HepG2 (cell line): ENCODE measurements at regions of chr19 and their contacts with region 1.

Region 1: GRCh38 chr19:41449079-41449864 is 6.3 kb downstream of the ERICH4 start:
- DNase-seq: peak; percentile 59
- ATAC-seq: peak; percentile 95
- H3K4me3 ChIP-seq: no peak overlapping the region
- H3K27ac ChIP-seq: no peak overlapping the region
- H3K4me1 ChIP-seq: 0 out of 2 replicates have a peak, but pooled peaks cover 4% of the 10 kb centered on the region
- H3K27me3 ChIP-seq: peaks cover 0 to 4% of the 10 kb centered on the region in 2 experiments; a peak in 1 of 5 replicates
- CTCF ChIP-seq: peak; percentile 96
- EP300 ChIP-seq: no peak
- POLR2A ChIP-seq: no peak
- RAD21 ChIP-seq: peak; percentile 87

Region 2: GRCh38 chr19:41495589-41495988 is 46.3 kb after region 1 on chr19:
- CTCF ChIA-PET with region 1: no interaction called
- POLR2A ChIA-PET with region 1: no interaction called
- in situ Hi-C with region 1: no loop called
- intact Hi-C with region 1: loop called (anchors 1 kb)
- DNase-seq: no peak
- ATAC-seq: no peak
- H3K4me3 ChIP-seq: no peak overlapping the region
- H3K27ac ChIP-seq: no peak overlapping the region
- H3K4me1 ChIP-seq: peaks cover under 1% of the 10 kb centered on the region
- H3K27me3 ChIP-seq: peaks cover 3 to 24% of the 10 kb centered on the region in 2 experiments
- CTCF ChIP-seq: no peak
- EP300 ChIP-seq: no peak
- POLR2A ChIP-seq: no peak
- RAD21 ChIP-seq: no peak

Region 3: GRCh38 chr19:41537789-41538188 is 88.5 kb after region 1 on chr19:
- CTCF ChIA-PET with region 1: interaction called, 12 read pairs
- POLR2A ChIA-PET with region 1: no interaction called
- in situ Hi-C with region 1: no loop called
- intact Hi-C with region 1: no loop called
- DNase-seq: peak; percentile 6
- ATAC-seq: no peak
- H3K4me3 ChIP-seq: no peak overlapping the region
- H3K27ac ChIP-seq: no peak overlapping the region
- H3K4me1 ChIP-seq: no peaks in the 10 kb centered on the region
- H3K27me3 ChIP-seq: peaks cover 0 to 13% of the 10 kb centered on the region in 2 experiments; a peak in 1 of 5 replicates
- CTCF ChIP-seq: peak; percentile 43; the same call in 1 of the 2 replicates
- EP300 ChIP-seq: no peak
- POLR2A ChIP-seq: no peak
- RAD21 ChIP-seq: no peak

Region 4: DNA sequence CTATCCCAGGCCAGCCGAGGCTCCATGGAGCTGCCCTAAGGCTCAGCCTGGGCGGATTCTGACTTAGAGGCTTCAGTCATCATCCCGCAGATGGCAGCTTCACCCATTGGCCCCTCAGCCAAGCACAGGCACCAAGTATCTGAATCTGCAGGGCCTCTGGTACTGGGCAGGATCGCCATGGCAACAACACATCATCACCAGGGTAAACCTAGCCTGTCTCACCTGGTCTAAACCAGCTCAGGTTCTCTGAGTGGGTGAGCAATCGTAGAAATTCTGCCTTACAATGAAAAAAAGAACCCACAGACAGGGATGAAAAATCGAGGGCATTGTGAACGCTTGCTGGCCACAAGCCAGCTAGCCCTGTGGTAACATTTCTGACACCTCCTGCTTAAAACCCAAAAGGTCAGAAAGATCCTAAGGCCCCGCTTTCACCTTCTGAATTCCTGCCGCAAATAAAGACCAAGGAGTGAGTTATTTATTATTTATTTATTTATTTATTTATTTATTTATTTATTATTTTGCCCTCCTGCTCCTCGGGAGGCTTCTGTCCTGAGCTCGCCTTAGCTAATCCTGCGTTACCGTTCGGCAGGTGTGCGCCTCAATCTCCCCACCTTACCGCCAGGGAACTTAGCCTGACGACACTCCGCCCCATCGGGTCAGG is 114.7 kb after region 1 on chr19:
- CTCF ChIA-PET with region 1: interaction called, 22 read pairs
- POLR2A ChIA-PET with region 1: interaction called, 4 read pairs
- in situ Hi-C with region 1: loop called (anchors 5 kb)
- intact Hi-C with region 1: loop called (anchors 1 kb)
- DNase-seq: no peak
- ATAC-seq: no peak; the same call in 1 of the 3 replicates
- H3K4me3 ChIP-seq: peak overlapping the region in 1 of 3 experiments; percentile 40; a peak in 1 of 6 replicates
- H3K27ac ChIP-seq: no peak overlapping the region
- H3K4me1 ChIP-seq: peaks cover 13% of the 10 kb centered on the region
- H3K27me3 ChIP-seq: peaks cover 3 to 27% of the 10 kb centered on the region in 2 experiments; a peak in 3 of 5 replicates
- CTCF ChIP-seq: no peak
- EP300 ChIP-seq: no peak
- POLR2A ChIP-seq: no peak
- RAD21 ChIP-seq: no peak

Region 5: DNA sequence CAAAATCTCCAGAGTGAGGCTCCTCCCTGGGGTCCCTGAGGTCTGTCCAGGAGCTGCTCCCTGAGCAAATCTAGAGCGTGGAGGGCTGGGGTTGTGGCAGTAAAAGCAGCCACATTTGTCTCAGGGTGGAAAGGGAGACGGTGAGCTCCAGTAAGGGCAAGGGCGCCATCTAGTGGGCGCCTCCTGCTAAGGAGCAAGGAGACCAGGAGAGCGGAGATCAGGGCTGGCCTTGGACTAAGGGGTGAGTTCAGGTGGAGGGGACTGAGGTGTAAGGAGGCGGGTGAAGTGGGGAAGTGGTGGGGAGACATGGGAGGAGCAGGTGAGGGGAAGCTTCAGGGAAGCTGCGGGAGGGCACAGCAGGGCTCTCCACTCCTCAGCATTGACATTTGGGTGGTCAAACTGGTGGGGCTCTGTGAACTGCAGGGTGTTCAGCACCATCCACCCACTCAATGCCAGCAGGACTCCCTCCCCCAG is 121.4 kb after region 1 on chr19:
- CTCF ChIA-PET with region 1: interaction called, 37 read pairs
- POLR2A ChIA-PET with region 1: no interaction called
- in situ Hi-C with region 1: no loop called
- intact Hi-C with region 1: loop called (anchors 1 kb)
- DNase-seq: peak; percentile 59
- ATAC-seq: peak; percentile 95
- H3K4me3 ChIP-seq: no peak overlapping the region
- H3K27ac ChIP-seq: no peak overlapping the region
- H3K4me1 ChIP-seq: no peaks in the 10 kb centered on the region
- H3K27me3 ChIP-seq: 0 out of 5 replicates have a peak, but pooled peaks cover 0 to 3% of the 10 kb centered on the region in 2 experiments
- CTCF ChIP-seq: peak; percentile 95
- EP300 ChIP-seq: no peak
- POLR2A ChIP-seq: no peak
- RAD21 ChIP-seq: peak; percentile 78

Region 6: DNA sequence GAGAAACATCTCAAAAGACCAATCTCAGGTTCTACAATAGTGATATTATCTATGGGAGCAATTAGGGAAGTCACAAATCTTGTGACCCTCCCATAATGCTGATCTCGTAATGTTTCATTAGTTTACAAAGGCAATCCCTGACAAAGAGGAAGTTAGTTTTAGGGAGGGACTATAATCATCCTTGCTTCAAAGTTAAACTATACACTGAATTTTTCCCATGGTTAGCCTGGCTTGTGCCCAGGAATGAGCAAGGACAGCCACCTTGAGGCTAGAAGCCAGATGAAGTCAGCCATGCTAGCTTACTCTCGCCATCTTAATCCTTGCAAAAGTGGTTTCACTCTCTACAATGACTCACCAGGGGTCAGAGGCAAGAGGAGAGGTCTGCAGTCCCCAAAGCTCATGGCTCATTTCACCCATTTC is 352.5 kb after region 1 on chr19:
- CTCF ChIA-PET with region 1: no interaction called
- POLR2A ChIA-PET with region 1: no interaction called
- in situ Hi-C with region 1: no loop called
- intact Hi-C with region 1: no loop called
- DNase-seq: no peak
- ATAC-seq: no peak
- H3K4me3 ChIP-seq: no peak overlapping the region
- H3K27ac ChIP-seq: no peak overlapping the region
- H3K4me1 ChIP-seq: peaks cover 10% of the 10 kb centered on the region
- H3K27me3 ChIP-seq: peaks cover 0 to 30% of the 10 kb centered on the region in 2 experiments; a peak in 2 of 5 replicates
- CTCF ChIP-seq: no peak
- EP300 ChIP-seq: no peak
- POLR2A ChIP-seq: no peak
- RAD21 ChIP-seq: no peak